Activated T-helper 2 cell treated with anti-CD3 and anti-CD28 coated beads, Interferon-gamma antibody, Interleukin-2, Interleukin-4, amounts not matched to agents 10 μg/mL and 5 μg/mL and 100 μg/mL, durations not matched to agents 14 hours and 24 hours and 36 hours (primary cell): ENCODE measurements at regions of chr13 and their contacts with region 1.

Region 1: GRCh38 chr13:108322206-108322824 is 52.8 kb downstream of the TNFSF13B start:
- DNase-seq: no peak
- H3K4me3 Mint-ChIP-seq: no peak overlapping the region
- H3K27ac Mint-ChIP-seq: no peak overlapping the region
- H3K4me1 Mint-ChIP-seq: peaks cover 1% of the 10 kb centered on the region
- H3K27me3 Mint-ChIP-seq: peaks cover 14% of the 10 kb centered on the region

Region 2: GRCh38 chr13:108227651-108228272 is 94.6 kb before region 1 on chr13:
- intact Hi-C with region 1: loop called (anchors 5 kb)
- DNase-seq: no peak
- H3K4me3 Mint-ChIP-seq: no peak overlapping the region
- H3K27ac Mint-ChIP-seq: no peak overlapping the region
- H3K4me1 Mint-ChIP-seq: peaks cover 24% of the 10 kb centered on the region
- H3K27me3 Mint-ChIP-seq: no peaks in the 10 kb centered on the region

Region 3: DNA sequence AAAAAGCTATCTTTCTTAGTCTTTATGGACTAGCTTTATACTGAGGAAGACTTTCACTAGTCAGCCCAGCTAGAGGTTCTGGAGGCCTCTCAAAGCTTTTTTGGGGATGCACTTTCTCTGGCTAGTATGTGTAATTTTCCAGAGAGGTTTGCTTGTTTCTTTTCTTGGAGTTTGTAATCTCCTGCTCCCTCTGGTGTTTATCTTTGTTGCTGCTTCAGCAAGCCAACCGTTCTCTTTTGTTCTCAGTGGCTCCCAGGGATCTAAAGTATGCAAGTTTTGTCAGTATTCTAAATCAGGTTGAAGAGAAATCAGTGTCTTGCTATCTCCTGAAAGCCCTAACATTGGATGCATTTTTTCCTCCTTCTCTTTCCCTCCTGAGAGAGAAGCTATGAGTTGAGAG is 185.9 kb after region 1 on chr13:
- intact Hi-C with region 1: loop called (anchors 10 kb)
- DNase-seq: no peak
- H3K4me3 Mint-ChIP-seq: no peak overlapping the region
- H3K27ac Mint-ChIP-seq: no peak overlapping the region
- H3K4me1 Mint-ChIP-seq: no peaks in the 10 kb centered on the region
- H3K27me3 Mint-ChIP-seq: no peaks in the 10 kb centered on the region

Region 4: GRCh38 chr13:108525827-108526226 is 203.5 kb after region 1 on chr13:
- intact Hi-C with region 1: no loop called
- DNase-seq: no peak
- H3K4me3 Mint-ChIP-seq: no peak overlapping the region
- H3K27ac Mint-ChIP-seq: no peak overlapping the region
- H3K4me1 Mint-ChIP-seq: no peaks in the 10 kb centered on the region
- H3K27me3 Mint-ChIP-seq: no peaks in the 10 kb centered on the region